Activated T-helper 1 cell treated with anti-CD3 and anti-CD28 coated beads, Interleukin-12 subunit alpha, Interleukin-12 subunit beta, Interleukin-2, Interleukin-4 antibody, amounts not matched to agents 30 ng/mL and 10 ng/mL and 1 ng/mL, durations not matched to agents 14 hours and 24 hours and 36 hours (primary cell): ENCODE measurements at regions of chr11 and their contacts with region 1.

Region 1: GRCh38 chr11:83156150-83156995 is 558 bp upstream of the PCF11 start:
- DNase-seq: peak; percentile 95
- H3K4me3 Mint-ChIP-seq: peak overlapping the region; percentile 97
- H3K27ac Mint-ChIP-seq: peak overlapping the region; percentile 96
- H3K4me1 Mint-ChIP-seq: peaks cover 36% of the 10 kb centered on the region
- H3K27me3 Mint-ChIP-seq: no peaks in the 10 kb centered on the region

Region 2: GRCh38 chr11:82906244-82906654 is 250.1 kb before region 1 on chr11:
- intact Hi-C with region 1: loop called (anchors 1 kb)
- DNase-seq: no peak
- H3K4me3 Mint-ChIP-seq: no peak overlapping the region
- H3K27ac Mint-ChIP-seq: no peak overlapping the region
- H3K4me1 Mint-ChIP-seq: peaks cover 56% of the 10 kb centered on the region
- H3K27me3 Mint-ChIP-seq: no peaks in the 10 kb centered on the region

Region 3: GRCh38 chr11:82978422-82979099 is 177.8 kb before region 1 on chr11:
- intact Hi-C with region 1: loop called (anchors 1 kb)
- DNase-seq: no peak
- H3K4me3 Mint-ChIP-seq: peak overlapping the region; percentile 21
- H3K27ac Mint-ChIP-seq: peak overlapping the region; percentile 42
- H3K4me1 Mint-ChIP-seq: peaks cover 38% of the 10 kb centered on the region
- H3K27me3 Mint-ChIP-seq: peaks cover 3% of the 10 kb centered on the region

Region 4: GRCh38 chr11:83063073-83063754 is 93.2 kb before region 1 on chr11:
- intact Hi-C with region 1: loop called (anchors 2 kb)
- DNase-seq: no peak
- H3K4me3 Mint-ChIP-seq: peak overlapping the region; percentile 74
- H3K27ac Mint-ChIP-seq: peak overlapping the region; percentile 88
- H3K4me1 Mint-ChIP-seq: peaks cover 25% of the 10 kb centered on the region
- H3K27me3 Mint-ChIP-seq: no peaks in the 10 kb centered on the region

Region 5: GRCh38 chr11:83174008-83174407 is 17.6 kb after region 1 on chr11:
- intact Hi-C with region 1: loop called (anchors 1 kb)
- DNase-seq: no peak
- H3K4me3 Mint-ChIP-seq: no peak overlapping the region
- H3K27ac Mint-ChIP-seq: no peak overlapping the region
- H3K4me1 Mint-ChIP-seq: peaks cover 63% of the 10 kb centered on the region
- H3K27me3 Mint-ChIP-seq: no peaks in the 10 kb centered on the region

Region 6: DNA sequence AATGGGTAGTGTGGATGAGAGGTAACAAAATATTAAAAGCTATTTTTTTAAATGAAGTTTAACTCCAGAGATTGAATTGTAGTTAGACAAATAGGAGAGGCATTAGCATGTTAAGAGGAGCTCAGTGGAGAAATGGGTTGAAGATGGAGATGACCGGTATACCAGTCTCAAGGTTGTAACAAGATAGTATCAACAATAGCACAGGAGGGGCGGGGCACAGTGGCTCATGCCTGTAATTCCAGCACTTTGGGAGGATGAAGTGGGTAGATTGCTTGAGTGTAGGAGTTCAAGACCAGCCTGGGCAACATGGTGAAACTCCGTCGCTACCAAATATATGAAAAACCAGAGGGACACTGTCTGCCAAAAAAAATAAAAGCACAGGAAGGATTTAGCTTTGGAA is 31.1 kb after region 1 on chr11:
- intact Hi-C with region 1: no loop called
- DNase-seq: no peak
- H3K4me3 Mint-ChIP-seq: no peak overlapping the region
- H3K27ac Mint-ChIP-seq: no peak overlapping the region
- H3K4me1 Mint-ChIP-seq: peaks cover 14% of the 10 kb centered on the region
- H3K27me3 Mint-ChIP-seq: no peaks in the 10 kb centered on the region

Region 7: DNA sequence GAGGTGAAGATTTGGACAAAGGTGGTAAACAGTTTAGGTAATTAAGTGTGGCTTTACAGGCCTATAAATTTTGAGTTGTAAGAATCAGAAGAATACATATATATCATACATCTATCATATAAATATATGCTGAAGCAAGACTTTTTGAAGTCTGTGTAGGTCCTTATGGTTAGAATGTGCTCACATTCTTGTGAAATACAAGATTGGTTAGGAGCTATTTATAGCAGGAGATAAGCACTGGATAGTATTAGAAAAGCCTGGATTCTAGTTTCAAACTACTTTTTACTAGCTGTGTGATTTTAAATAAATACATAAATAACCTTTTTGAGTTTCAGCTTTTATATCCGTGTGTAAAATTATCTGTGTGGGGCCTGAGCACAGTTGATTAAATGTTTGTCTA is 79.5 kb after region 1 on chr11:
- intact Hi-C with region 1: no loop called
- DNase-seq: no peak
- H3K4me3 Mint-ChIP-seq: no peak overlapping the region
- H3K27ac Mint-ChIP-seq: no peak overlapping the region
- H3K4me1 Mint-ChIP-seq: no peaks in the 10 kb centered on the region
- H3K27me3 Mint-ChIP-seq: peaks cover 8% of the 10 kb centered on the region

Region 8: DNA sequence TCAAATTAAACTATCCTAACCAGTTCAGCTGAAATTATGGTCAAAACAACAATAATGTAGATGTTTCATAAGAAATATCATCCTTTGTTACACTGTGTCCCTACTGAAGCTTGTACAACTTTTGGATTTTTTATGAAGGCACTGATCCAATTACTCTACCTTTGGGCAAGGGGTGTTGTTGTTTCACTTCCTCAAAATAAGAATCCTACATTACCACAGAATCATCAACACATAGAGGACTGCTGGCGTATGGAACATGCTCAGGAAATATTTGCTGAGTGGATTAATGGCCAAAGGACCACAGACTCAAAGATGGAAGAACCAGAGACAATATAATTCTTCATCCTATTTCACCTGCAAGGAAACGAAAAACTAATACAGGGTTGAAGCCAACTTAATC is 1037.3 kb after region 1 on chr11:
- intact Hi-C with region 1: no loop called
- DNase-seq: no peak
- H3K4me3 Mint-ChIP-seq: no peak overlapping the region
- H3K27ac Mint-ChIP-seq: no peak overlapping the region
- H3K4me1 Mint-ChIP-seq: no peaks in the 10 kb centered on the region
- H3K27me3 Mint-ChIP-seq: no peaks in the 10 kb centered on the region